ENCODE measurements at regions of chr6 and their contacts with region 1.

Region 1: DNA sequence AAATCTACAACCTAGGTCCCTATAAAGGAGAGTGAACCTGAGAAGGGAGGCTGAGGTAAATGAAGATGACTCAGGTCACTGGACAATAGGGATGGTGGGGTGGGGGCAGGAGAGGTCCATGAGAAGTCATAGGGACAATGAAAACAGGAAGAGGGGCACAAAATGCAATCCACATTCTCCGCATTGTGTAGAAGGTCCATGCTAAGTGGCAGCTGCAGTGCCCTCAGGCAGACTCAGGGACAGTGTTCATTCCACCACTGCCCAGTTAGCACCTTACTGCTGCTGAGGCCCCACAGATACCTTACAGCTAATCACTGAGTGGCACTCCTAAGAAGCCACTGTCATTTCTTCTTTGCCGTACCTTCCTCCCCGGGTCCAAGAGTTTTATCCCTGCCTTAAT is 156.8 kb downstream of the RCAN2 start:
- DNase-seq: no peak
- ATAC-seq: no peak
- H3K4me3 ChIP-seq: no peak overlapping the region
- H3K27ac ChIP-seq: no peak overlapping the region
- H3K4me1 ChIP-seq: no peaks in the 10 kb centered on the region
- H3K27me3 ChIP-seq: no peaks in the 10 kb centered on the region
- CTCF ChIP-seq: no peak
- POLR2A ChIP-seq: no peak
- RAD21 ChIP-seq: no peak

Region 2: DNA sequence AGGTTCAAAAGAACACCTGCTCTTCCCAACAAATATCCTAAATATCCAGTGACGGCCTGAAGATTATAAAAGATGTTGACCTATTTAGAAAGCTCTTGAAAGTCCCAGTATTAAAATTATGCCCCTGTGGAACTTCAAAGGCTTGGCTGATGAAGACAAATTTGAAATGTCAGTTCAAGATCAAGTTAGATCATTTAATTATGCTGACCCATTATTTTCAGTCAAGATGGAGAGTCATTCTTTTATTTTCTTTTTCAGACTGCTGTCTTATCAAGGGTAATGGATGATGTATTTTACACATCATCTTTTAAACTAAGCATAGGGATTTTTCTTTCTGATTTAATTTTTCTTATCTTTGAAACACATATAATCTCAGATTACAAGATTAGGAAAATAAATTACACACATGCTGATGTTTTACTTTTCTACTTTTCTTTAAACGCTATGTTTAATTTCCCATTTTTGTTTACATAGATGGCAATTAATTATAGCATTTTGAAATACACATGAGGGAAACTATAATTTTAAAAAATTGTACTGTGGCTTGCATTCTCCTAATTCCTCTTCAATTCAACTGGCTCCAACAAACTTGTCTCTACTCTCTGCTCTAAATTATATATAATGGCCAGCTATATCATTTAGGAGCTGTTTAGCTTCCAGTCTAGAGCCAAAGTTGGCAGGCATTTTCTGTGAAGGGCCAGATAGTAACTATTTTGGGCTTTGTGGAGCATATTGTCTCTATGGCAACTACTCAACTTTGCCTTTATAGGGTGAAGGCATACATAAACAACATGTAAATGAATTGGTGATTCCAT is 33.1 kb after region 1 on chr6:
- CTCF ChIA-PET with region 1: no interaction called
- POLR2A ChIA-PET with region 1: no interaction called
- dilution Hi-C with region 1: no loop called
- in situ Hi-C with region 1: no loop called
- intact Hi-C with region 1: loop called (anchors 1 kb)
- DNase-seq: no peak
- ATAC-seq: no peak
- H3K4me3 ChIP-seq: no peak overlapping the region
- H3K27ac ChIP-seq: no peak overlapping the region
- H3K4me1 ChIP-seq: no peaks in the 10 kb centered on the region
- H3K27me3 ChIP-seq: no peaks in the 10 kb centered on the region
- CTCF ChIP-seq: no peak
- POLR2A ChIP-seq: no peak
- RAD21 ChIP-seq: no peak